AG04450 (cell line): ENCODE measurements at regions of chr2 and their contacts with region 1.

Region 1: GRCh38 chr2:232292395-232293154 is 86.0 kb upstream of the ALPP start:
- DNase-seq: peak; percentile 20
- H3K4me3 ChIP-seq: no peak overlapping the region
- H3K27ac ChIP-seq: no peak overlapping the region
- H3K27me3 ChIP-seq: no peaks in the 10 kb centered on the region
- CTCF ChIP-seq: peak; percentile 71

Region 2: GRCh38 chr2:231925303-231926179 is 367.0 kb before region 1 on chr2:
- CTCF ChIA-PET with region 1: interaction called, 18 read pairs
- POLR2A ChIA-PET with region 1: no interaction called
- DNase-seq: peak; percentile 61
- H3K4me3 ChIP-seq: peak overlapping the region; percentile 50
- H3K27ac ChIP-seq: no peak overlapping the region
- H3K27me3 ChIP-seq: peaks cover 72% of the 10 kb centered on the region
- CTCF ChIP-seq: peak; percentile 68

Region 3: DNA sequence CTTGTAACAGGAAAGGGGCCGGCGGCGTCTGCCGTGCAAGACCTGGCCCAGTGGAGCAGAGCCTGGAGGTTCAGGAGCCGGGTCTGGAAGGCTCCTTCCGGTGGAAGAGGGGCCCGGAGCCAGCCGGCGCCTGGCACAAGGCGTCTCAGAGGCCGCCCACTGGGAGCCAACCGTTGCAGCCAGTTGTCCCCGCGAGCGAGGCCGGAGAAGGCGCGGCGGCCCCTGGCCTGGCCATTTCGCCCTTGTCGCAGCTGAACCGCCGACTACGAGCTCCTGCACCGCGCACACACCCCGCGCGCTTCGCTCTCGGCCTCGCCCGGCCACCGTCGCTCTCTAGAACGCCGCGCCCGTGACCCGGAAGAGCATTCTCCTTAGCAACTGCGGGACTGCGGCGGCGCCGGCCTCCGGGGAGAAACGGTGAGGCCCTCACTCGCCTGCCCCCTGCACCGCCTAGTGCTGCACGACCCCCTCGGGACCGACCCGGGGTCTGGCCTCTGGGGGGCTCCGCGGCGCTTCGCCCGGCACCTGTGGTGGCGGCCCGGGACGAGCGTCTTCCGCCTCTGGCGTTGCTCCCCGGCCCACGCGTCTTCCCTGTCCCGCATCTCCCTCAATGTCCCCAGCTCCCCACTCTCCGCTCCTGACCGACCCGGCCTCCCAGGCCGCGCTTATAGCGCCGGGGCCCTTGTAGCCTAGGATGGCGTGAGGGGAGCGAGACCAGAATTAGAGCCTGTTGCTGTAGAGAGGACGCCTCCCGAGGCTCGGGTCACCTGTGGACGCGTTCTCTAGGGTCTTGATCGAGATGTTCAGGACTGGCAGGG is 331.0 kb before region 1 on chr2 and contains the start of gene DIS3L2:
- CTCF ChIA-PET with region 1: no interaction called
- POLR2A ChIA-PET with region 1: interaction called, 11 read pairs
- DNase-seq: peak; percentile 41
- H3K4me3 ChIP-seq: peak within 1 kb of the TSS; percentile 89
- H3K27ac ChIP-seq: peak within 1 kb of the TSS; percentile 47
- H3K27me3 ChIP-seq: no peaks in the 10 kb centered on the region
- CTCF ChIP-seq: no peak
- polyA plus RNA-seq, gene DIS3L2: 8.2 and 9.9 TPM in 2 replicates

Region 4: GRCh38 chr2:232315049-232315922 is 22.7 kb after region 1 on chr2:
- CTCF ChIA-PET with region 1: no interaction called
- POLR2A ChIA-PET with region 1: no interaction called
- DNase-seq: peak; percentile 2
- H3K4me3 ChIP-seq: no peak overlapping the region
- H3K27ac ChIP-seq: no peak overlapping the region
- H3K27me3 ChIP-seq: no peaks in the 10 kb centered on the region
- CTCF ChIP-seq: no peak

Region 5: GRCh38 chr2:232438951-232439757 is 146.6 kb after region 1 on chr2:
- CTCF ChIA-PET with region 1: no interaction called
- POLR2A ChIA-PET with region 1: no interaction called
- DNase-seq: no peak
- H3K4me3 ChIP-seq: no peak overlapping the region
- H3K27ac ChIP-seq: no peak overlapping the region
- H3K27me3 ChIP-seq: peaks cover 10% of the 10 kb centered on the region
- CTCF ChIP-seq: no peak; the same call in 1 of the 2 replicates

Region 6: GRCh38 chr2:232504438-232504837 is 211.9 kb after region 1 on chr2:
- CTCF ChIA-PET with region 1: interaction called, 11 read pairs
- POLR2A ChIA-PET with region 1: no interaction called
- DNase-seq: no peak
- H3K4me3 ChIP-seq: no peak overlapping the region
- H3K27ac ChIP-seq: no peak overlapping the region
- H3K27me3 ChIP-seq: peaks cover 52% of the 10 kb centered on the region
- CTCF ChIP-seq: no peak